GM10248 (cell line): ENCODE measurements at regions of chr14 and their contacts with region 1.

Region 1: DNA sequence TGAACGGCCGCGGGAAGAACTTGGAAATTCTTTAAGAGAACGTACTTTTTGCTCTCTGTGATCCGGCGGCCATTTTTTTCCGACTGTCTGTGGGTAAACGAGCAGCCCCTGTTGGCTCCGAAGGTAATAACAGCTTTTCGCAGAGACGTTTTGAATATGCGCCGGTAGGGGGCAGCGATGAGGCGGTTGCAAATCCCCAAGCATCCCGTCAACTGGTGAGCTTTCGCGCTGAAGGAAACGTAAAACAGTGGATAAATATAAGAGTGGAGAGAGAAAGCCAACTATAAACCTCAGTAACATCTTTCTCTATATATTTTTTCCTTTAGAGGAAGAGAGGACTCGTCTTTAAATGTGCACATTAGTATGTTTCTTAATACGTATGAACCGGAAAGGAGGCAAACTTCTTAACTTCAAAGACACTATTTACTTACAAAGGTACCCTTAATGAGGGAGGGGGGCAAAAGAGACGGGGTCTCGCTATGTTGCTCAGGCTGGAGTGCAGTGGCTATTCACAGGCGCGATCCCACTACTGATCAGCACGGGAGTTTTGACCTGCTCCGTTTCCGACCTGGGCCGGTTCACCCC is 9.6 kb upstream of the NEMF start:
- DNase-seq: peak; percentile 59
- CTCF ChIP-seq: peak; percentile 100

Region 2: DNA sequence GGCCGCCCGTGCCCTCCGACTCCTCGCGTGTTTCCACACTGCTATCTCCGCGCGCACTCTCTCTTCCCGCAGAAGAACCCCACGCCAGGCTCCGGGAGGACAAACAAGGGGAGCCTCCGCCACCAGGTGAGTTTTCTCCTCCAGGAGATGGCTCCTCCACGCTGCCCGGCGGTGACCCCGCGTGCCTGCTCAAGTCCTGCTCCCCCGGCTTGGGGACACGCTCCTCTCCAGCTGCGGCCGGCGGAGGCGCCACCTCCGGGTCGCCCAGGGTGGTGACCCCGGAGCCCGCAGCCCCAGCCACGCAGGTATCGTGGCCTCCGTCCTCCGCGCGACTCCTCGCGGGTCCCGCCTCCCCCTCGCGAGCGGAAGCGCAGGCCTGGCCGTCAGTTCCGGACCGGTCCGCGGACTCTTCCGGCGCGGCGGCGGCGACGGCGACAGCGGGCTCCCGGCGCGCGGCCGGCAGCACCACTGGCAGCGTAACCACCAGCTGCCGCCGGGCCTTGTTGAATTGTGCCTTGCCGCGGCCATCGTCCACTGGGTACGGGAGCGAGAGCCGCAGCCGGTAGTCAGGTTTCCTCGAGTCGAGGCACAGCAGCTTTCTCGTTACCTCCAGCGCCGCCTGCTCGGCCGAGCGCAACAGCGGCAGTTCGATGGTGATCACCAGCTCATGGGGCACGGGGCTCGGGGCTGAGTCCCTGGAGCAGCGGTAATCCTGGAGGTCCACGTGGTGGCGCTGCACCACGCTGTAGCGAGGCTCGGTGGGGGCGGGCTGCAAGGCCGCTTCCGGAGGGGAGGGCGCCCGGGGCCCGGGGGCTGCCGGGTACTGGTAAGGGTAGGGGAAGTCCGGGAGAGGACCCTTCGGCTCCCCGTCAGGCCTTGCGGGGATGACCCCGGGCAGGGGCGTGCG is 228.3 kb before region 1 on chr14:
- CTCF ChIA-PET with region 1: interaction called, 22 read pairs
- POLR2A ChIA-PET with region 1: no interaction called
- DNase-seq: peak; percentile 93
- CTCF ChIP-seq: peak; percentile 94

Region 3: GRCh38 chr14:49971156-49972130 is 109.3 kb after region 1 on chr14:
- CTCF ChIA-PET with region 1: interaction called, 13 read pairs
- POLR2A ChIA-PET with region 1: no interaction called
- DNase-seq: peak; percentile 70
- CTCF ChIP-seq: no peak

Region 4: DNA sequence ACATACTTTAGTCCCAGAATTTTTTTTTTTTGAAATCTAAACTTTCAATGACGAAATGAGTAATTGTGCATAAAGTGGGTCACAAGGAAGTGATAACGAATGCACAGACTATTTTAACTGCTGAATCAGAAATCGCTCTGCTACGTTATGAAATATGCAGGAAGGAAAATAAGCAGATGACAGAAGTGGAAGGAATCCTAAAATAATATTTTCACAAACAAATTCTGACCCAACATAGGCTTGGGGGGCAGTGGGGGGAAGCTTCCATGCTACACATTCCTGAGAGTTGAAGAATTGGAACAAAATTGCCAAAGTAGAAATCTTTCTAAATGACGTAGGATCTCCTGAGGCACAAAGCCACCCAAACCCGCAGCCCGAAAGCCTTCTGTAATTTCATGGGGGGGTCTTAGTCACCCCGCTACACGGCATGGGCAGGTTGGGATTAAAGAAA is 120.3 kb after region 1 on chr14:
- CTCF ChIA-PET with region 1: no interaction called
- POLR2A ChIA-PET with region 1: no interaction called
- DNase-seq: no peak
- CTCF ChIP-seq: no peak

Region 5: GRCh38 chr14:50018201-50018932 is 156.2 kb after region 1 on chr14:
- CTCF ChIA-PET with region 1: interaction called, 11 read pairs
- POLR2A ChIA-PET with region 1: no interaction called
- DNase-seq: no peak
- CTCF ChIP-seq: no peak

Region 6: GRCh38 chr14:50060871-50061663 is 198.9 kb after region 1 on chr14:
- CTCF ChIA-PET with region 1: interaction called, 34 read pairs
- POLR2A ChIA-PET with region 1: interaction called, 5 read pairs
- DNase-seq: peak; percentile 46
- CTCF ChIP-seq: no peak

Region 7: GRCh38 chr14:50091240-50091913 is 229.2 kb after region 1 on chr14:
- CTCF ChIA-PET with region 1: interaction called, 183 read pairs
- POLR2A ChIA-PET with region 1: no interaction called
- DNase-seq: no peak
- CTCF ChIP-seq: no peak